ENCODE measurements at regions of chr12 and their contacts with region 1.

Region 1: GRCh38 chr12:69470189-69471075 is at the start of gene FRS2:
- DNase-seq: peak; percentile 92 to 99 (median 96)

Region 2: DNA sequence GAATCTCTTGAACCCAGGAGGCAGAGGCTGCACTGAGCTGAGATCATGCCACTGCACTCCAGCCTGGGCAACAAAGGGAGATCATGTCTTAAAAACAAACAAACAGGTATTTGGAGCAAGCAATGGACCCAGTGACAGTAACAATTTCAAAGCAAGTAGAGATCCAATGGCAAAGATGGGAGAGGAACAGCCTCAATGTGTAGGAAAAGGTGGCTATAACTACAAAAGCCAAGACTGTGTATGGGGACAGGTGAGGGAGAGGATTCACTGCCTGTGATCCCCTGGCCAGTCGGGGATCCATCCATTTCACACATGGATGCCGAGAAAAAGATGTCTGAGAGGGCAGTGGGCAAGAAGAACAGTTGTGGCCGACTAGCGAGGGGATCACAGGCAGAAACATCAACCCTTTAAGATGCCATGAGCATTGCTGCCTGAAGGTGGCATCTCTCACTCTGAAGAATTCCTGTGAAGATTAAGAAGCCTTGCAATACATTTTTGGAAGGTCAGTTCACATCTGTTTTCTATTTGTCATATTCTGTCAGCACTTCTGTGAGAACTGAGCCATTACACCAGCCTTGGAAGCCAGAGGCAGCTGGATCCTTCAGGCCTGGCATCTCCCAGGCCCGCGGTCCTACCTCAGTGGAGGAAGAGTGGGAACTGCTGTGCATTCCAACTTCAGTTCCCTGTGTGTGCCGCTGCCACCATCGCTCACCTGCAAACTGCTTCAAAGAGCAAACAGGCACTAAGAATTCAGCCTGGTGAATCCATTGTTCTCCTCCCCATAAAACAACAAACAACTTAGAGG is 54.8 kb before region 1 on chr12:
- intact Hi-C with region 1: loop called (anchors 10 kb)
- DNase-seq: peak in 6 of 10 donors; percentile 14 to 81 (median 51)

Region 3: GRCh38 chr12:69570545-69571399 is 100.3 kb after region 1 on chr12:
- intact Hi-C with region 1: loop called (anchors 10 kb)
- DNase-seq: peak in 4 of 10 donors; percentile 20 to 47 (median 32)

Region 4: GRCh38 chr12:69744109-69744508 is 273.7 kb after region 1 on chr12:
- intact Hi-C with region 1: no loop called
- DNase-seq: no peak